ENCODE measurements at regions of chr5 and their contacts with region 1.

Region 1: GRCh38 chr5:134041570-134042411 is 37.0 kb upstream of the VDAC1 start:
- DNase-seq: no peak
- ATAC-seq: no peak
- H3K4me3 Mint-ChIP-seq: no peak overlapping the region
- H3K27ac Mint-ChIP-seq: no peak overlapping the region
- H3K4me1 Mint-ChIP-seq: peaks cover 8% of the 10 kb centered on the region
- H3K27me3 Mint-ChIP-seq: peaks cover 35% of the 10 kb centered on the region

Region 2: DNA sequence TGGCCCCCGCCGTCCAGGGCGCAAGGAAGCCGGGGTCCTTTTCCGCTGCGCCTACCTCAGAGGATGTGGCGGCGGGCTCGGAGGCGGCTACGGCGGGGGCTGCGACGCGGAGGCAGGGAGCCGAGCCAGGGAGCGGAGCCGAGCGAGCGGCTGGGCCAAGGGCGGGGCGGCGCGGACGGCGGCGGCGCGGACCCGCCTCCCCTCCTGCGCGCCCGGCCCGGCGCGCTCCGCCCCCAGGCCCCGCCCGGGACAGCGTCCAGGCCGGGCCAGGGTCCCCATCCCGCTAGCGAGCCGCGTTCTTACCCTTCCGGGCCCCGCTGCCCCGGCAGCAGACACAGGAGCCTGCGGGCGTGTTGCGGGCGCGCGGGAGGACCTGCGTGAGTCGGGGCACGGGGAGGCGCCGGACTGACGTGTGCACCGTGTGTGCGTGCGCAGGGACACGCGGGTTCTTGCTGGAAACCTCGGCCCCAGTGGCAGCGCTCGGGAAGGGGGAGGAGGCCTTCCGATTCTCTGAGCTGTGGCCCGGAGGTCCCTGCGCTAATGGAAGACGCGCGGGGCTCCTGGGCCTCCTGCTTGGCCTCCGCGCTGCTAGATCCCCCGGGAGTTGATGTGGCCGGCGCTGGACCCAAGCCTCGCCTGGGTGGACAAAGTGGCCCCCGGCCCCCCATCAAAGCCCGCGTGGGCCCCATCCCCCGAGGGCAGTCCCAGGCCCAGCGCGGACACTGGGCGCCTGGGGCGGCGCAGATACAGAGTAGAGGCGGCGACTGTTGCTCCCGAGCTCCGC is 37.0 kb before region 1 on chr5 and contains the start of gene VDAC1:
- CTCF ChIA-PET with region 1: interaction called, 21 read pairs
- DNase-seq: peak; percentile 89
- ATAC-seq: peak; percentile 83
- H3K4me3 Mint-ChIP-seq: peak within 1 kb of the TSS; percentile 90
- H3K27ac Mint-ChIP-seq: peak within 1 kb of the TSS; percentile 93
- H3K4me1 Mint-ChIP-seq: peaks cover 43% of the 10 kb centered on the region
- H3K27me3 Mint-ChIP-seq: no peaks in the 10 kb centered on the region
- total RNA-seq, gene VDAC1: 204 to 258 TPM

Region 3: DNA sequence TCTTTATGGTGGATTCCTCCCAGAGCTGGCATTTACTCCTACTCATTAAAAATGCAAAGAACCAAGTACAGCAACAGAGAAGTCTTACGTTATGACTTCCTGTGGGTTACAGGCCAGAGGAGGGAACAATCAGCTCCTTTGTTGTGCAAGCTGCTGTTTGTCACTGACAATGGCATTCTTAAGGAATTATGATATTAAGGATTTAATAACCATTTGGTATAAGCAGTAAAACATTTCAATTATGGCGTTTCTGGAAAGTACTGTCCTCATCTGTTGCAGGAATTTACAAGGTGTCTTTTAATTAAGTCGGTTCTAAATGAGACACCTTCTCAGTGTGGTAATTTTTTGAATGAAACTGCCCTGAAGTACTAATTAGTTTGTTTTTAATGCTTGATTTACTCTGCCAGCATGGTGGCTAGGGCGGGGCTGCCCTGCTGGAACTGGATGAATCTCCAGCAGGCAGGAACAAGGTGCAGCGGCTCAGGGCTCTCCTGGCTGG is 12.1 kb after region 1 on chr5:
- CTCF ChIA-PET with region 1: interaction called, 49 read pairs
- DNase-seq: no peak
- ATAC-seq: no peak
- H3K4me3 Mint-ChIP-seq: no peak overlapping the region
- H3K27ac Mint-ChIP-seq: no peak overlapping the region
- H3K4me1 Mint-ChIP-seq: peaks cover 12% of the 10 kb centered on the region
- H3K27me3 Mint-ChIP-seq: peaks cover 14% of the 10 kb centered on the region

Region 4: GRCh38 chr5:134070725-134071613 is 29.2 kb after region 1 on chr5:
- CTCF ChIA-PET with region 1: interaction called, 18 read pairs
- DNase-seq: no peak
- ATAC-seq: no peak
- H3K4me3 Mint-ChIP-seq: no peak overlapping the region
- H3K27ac Mint-ChIP-seq: no peak overlapping the region
- H3K4me1 Mint-ChIP-seq: peaks cover 15% of the 10 kb centered on the region
- H3K27me3 Mint-ChIP-seq: peaks cover 52% of the 10 kb centered on the region

Region 5: GRCh38 chr5:134113902-134114875 is 72.4 kb after region 1 on chr5 and contains the start of gene TCF7:
- CTCF ChIA-PET with region 1: interaction called, 24 read pairs
- DNase-seq: peak; percentile 63
- ATAC-seq: peak; percentile 85
- H3K4me3 Mint-ChIP-seq: peak within 1 kb of the TSS; percentile 68
- H3K27ac Mint-ChIP-seq: peak within 1 kb of the TSS; percentile 35
- H3K4me1 Mint-ChIP-seq: peaks cover 30% of the 10 kb centered on the region
- H3K27me3 Mint-ChIP-seq: peaks cover 84% of the 10 kb centered on the region
- total RNA-seq, gene TCF7: 7.0 to 7.9 TPM

Region 6: DNA sequence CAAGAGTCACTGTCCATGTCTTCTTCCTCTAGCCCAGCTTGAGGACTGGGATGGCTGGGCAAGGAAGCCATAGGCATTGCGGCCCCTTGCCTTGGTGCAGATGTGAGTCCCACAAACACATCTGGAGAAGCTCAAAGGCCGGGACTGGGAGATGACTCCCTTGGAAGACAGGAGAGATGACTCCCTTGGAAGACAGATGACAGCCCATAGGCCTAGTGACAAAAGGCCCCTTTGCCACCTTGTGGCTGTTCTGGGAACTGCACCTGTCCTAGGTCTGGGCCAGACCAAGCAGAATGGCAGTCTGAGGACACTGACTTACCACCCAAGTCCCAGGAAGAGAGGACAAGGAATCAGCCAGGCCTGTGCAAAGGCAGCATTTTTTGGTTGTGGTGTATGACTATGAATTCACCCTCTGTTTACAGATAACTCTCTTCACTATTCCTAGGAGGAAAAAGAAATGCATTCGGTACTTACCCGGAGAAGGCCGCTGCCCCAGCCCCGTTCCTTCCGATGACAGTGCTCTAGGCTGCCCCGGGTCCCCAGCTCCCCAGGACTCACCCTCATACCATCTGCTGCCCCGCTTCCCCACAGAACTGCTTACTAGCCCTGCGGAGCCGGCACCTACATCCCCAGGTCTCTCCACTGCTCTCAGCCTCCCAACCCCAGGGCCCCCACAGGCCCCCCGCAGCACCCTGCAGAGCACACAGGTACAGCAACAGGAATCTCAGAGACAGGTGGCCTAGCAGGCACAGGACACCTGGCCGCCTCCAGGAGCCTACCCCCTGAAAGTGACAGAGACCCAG is 104.2 kb after region 1 on chr5:
- CTCF ChIA-PET with region 1: interaction called, 430 read pairs
- DNase-seq: peak; percentile 84
- ATAC-seq: peak; percentile 84
- H3K4me3 Mint-ChIP-seq: no peak overlapping the region
- H3K27ac Mint-ChIP-seq: no peak overlapping the region
- H3K4me1 Mint-ChIP-seq: peaks cover 7% of the 10 kb centered on the region
- H3K27me3 Mint-ChIP-seq: no peaks in the 10 kb centered on the region